ENCODE measurements at regions of chr13 and their contacts with region 1.

Region 1: DNA sequence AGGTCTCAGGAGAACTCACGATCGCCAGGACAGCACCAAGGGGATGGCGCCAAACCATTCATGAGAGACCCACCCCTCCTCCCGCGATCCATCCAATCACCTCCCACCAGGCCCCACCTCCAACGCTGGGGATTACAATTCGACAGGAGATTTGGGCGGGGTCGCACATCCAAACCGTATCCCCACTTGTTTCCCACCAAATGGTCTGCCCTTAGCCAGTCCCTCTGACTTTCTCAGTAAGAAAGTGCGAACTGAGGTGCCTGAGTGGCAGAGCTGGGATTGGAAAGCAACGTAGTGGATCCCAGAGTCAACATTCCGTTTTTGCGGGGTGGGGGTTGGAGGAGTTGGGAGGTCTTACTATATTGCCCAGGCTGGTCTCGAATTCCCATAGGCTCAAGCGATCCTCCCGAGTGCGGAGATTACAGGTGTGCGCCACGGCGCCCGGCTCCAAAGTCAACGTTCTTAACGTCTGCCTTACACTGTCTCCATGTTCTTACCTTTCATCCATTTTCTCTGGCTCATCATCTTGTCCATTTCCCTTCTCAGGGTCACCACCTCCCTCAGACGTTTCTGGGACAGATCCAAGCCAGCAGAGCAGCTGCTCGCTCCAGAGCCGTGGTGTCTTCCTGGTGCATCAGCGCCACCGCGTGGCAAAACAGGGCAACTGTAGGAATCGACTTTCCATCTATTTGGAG is 102.7 kb upstream of the ABCC4 start:
- DNase-seq: peak; percentile 86
- H3K4me3 Mint-ChIP-seq: peak overlapping the region; percentile 84
- H3K27ac Mint-ChIP-seq: no peak overlapping the region
- H3K4me1 Mint-ChIP-seq: peaks cover 6% of the 10 kb centered on the region
- H3K27me3 Mint-ChIP-seq: peaks cover 2% of the 10 kb centered on the region

Region 2: GRCh38 chr13:94435604-94436226 is 968.3 kb before region 1 on chr13:
- CTCF ChIA-PET with region 1: no interaction called
- intact Hi-C with region 1: loop called (anchors 1 kb)
- DNase-seq: no peak
- H3K4me3 Mint-ChIP-seq: no peak overlapping the region
- H3K27ac Mint-ChIP-seq: no peak overlapping the region
- H3K4me1 Mint-ChIP-seq: peaks cover 28% of the 10 kb centered on the region
- H3K27me3 Mint-ChIP-seq: no peaks in the 10 kb centered on the region

Region 3: GRCh38 chr13:94674609-94675348 is 729.2 kb before region 1 on chr13:
- CTCF ChIA-PET with region 1: interaction called, 8 read pairs
- intact Hi-C with region 1: loop called (anchors 2 kb)
- DNase-seq: peak; percentile 80
- H3K4me3 Mint-ChIP-seq: no peak overlapping the region
- H3K27ac Mint-ChIP-seq: no peak overlapping the region
- H3K4me1 Mint-ChIP-seq: no peaks in the 10 kb centered on the region
- H3K27me3 Mint-ChIP-seq: peaks cover 23% of the 10 kb centered on the region

Region 4: DNA sequence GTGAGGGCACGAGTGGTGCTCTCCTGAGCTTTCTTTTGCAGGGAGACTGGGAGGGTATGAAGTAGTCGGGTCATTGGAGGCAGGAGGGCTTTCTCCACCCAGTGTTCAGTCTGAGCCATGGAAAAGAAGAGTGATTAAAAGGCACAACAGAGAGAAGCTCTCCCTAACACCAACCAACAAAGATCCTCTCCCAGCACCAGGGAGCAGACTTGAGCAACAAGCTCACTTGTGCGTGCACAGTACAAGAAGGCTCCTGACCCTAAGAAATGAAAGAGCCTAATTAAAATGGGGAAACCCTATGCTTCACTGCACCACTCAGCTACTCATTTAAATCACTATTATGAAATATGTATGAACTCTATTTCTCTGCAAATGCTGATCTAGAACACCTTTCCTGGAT is 415.3 kb before region 1 on chr13:
- CTCF ChIA-PET with region 1: interaction called, 4 read pairs
- intact Hi-C with region 1: loop called (anchors 5 kb)
- DNase-seq: peak; percentile 7
- H3K4me3 Mint-ChIP-seq: no peak overlapping the region
- H3K27ac Mint-ChIP-seq: no peak overlapping the region
- H3K4me1 Mint-ChIP-seq: peaks cover 3% of the 10 kb centered on the region
- H3K27me3 Mint-ChIP-seq: peaks cover 12% of the 10 kb centered on the region

Region 5: GRCh38 chr13:95301183-95301967 is 102.6 kb before region 1 on chr13 and contains the start of gene ABCC4:
- CTCF ChIA-PET with region 1: interaction called, 10 read pairs
- intact Hi-C with region 1: loop called (anchors 1 kb)
- DNase-seq: peak; percentile 53
- H3K4me3 Mint-ChIP-seq: peak within 1 kb of the TSS; percentile 80
- H3K27ac Mint-ChIP-seq: peak within 1 kb of the TSS; percentile 51
- H3K4me1 Mint-ChIP-seq: peaks cover 39% of the 10 kb centered on the region
- H3K27me3 Mint-ChIP-seq: peaks cover 7% of the 10 kb centered on the region
- total RNA-seq, gene ABCC4: 8.0 to 8.1 TPM

Region 6: DNA sequence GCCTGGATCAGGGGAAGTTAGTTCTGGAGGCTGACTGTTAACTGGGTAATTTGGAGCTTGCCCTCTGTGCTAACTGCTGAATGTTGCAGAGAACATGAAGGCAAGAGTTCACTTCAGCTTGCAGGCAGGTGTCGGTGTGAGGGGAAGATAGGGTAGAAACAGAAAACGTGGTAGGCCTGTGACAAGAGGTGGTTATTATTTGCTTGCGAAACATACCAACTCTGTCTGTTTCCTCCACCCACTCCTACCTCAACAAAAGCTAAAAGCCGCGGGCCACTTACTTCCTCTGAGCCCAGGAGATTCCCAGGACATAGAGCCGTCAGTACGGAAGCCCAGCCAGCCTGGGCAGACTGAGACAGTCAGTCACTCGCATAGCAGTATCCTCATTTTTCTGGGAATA is 16.5 kb after region 1 on chr13:
- CTCF ChIA-PET with region 1: interaction called, 21 read pairs
- intact Hi-C with region 1: no loop called
- DNase-seq: no peak
- H3K4me3 Mint-ChIP-seq: no peak overlapping the region
- H3K27ac Mint-ChIP-seq: no peak overlapping the region
- H3K4me1 Mint-ChIP-seq: no peaks in the 10 kb centered on the region
- H3K27me3 Mint-ChIP-seq: peaks cover 3% of the 10 kb centered on the region

Region 7: GRCh38 chr13:95573226-95573625 is 169.3 kb after region 1 on chr13:
- CTCF ChIA-PET with region 1: no interaction called
- intact Hi-C with region 1: no loop called
- DNase-seq: no peak
- H3K4me3 Mint-ChIP-seq: no peak overlapping the region
- H3K27ac Mint-ChIP-seq: no peak overlapping the region
- H3K4me1 Mint-ChIP-seq: no peaks in the 10 kb centered on the region
- H3K27me3 Mint-ChIP-seq: peaks cover 21% of the 10 kb centered on the region

Measured in activated naive CD4-positive, alpha-beta T cell treated with anti-CD3 and anti-CD28 coated beads for 36 hours (primary cell).